ENCODE measurements at regions of chr10 and their contacts with region 1.

Region 1: GRCh38 chr10:22988581-22989360 is 60.9 kb downstream of the ARMC3 start:
- DNase-seq: peak; percentile 17 to 91 (median 72)

Region 2: GRCh38 chr10:22003079-22003913 is 985.5 kb before region 1 on chr10 and contains the start of gene DNAJC1:
- intact Hi-C with region 1: loop called (anchors 5 kb)
- DNase-seq: peak; percentile 97 to 99 (median 99)

Region 3: DNA sequence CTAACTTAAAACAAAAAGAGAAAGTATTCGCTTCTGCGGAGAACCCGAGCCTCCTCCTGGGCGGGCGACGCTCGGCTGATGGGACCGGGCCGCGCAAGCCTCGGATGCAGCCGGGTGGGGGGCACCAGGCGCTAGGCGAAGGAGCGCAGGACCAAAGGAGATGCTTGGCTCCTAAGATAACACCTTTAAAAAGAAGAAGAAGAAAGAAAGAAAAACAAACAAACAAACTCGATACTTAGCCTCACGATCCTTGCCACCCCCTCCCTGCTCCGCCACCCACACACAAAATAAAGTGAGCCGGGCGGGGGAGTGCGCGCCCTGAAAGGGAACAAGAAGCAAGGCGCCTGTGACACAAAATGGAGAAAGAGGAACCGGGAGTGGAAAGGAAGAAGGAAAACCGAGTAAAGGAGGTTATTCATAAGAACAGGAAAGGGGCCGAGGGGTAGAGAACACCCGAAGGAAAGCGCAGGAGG is 737.0 kb before region 1 on chr10:
- intact Hi-C with region 1: loop called (anchors 10 kb)
- DNase-seq: peak; percentile 55 to 91 (median 79)

Region 4: DNA sequence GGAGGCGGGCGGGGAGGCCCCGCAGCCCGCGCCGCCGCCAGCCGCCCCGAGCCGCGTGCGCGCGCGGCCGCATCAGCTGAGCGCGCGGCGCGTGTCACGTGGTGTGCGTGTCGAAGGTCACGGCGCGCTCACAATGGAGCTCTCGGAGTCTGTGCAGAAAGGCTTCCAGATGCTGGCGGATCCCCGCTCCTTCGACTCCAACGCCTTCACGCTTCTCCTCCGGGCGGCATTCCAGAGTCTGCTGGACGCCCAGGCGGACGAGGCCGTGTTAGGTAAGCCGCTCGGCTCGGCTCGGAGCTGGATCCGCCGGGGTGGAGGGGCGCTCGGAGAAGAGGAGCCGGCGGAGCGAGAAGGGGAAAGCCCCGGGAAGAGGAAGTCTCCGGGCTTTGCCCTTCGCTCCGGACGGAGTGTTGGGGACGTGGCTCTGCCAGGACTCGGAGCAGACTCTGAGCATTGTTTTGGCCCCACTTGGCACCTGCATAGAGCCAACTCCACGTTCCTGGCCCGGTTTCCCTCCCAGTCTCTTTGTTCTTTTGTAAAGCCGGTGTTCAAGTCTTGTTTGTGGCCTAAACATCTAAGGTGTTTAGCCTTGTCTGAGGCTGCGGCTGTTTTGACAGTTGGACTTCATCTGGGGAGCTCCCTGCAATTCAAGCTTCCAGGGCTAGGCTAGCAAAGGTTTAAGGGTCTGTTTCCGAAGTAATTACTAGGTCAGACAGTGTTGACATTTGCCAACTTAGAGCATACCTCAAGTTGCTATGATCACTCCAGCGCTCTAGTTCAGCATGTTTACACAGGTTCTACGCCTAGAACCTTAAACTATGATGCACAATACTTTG is 672.3 kb before region 1 on chr10 and contains the start of gene COMMD3:
- intact Hi-C with region 1: loop called (anchors 5 kb)
- DNase-seq: peak; percentile 77 to 95 (median 90)

Region 5: DNA sequence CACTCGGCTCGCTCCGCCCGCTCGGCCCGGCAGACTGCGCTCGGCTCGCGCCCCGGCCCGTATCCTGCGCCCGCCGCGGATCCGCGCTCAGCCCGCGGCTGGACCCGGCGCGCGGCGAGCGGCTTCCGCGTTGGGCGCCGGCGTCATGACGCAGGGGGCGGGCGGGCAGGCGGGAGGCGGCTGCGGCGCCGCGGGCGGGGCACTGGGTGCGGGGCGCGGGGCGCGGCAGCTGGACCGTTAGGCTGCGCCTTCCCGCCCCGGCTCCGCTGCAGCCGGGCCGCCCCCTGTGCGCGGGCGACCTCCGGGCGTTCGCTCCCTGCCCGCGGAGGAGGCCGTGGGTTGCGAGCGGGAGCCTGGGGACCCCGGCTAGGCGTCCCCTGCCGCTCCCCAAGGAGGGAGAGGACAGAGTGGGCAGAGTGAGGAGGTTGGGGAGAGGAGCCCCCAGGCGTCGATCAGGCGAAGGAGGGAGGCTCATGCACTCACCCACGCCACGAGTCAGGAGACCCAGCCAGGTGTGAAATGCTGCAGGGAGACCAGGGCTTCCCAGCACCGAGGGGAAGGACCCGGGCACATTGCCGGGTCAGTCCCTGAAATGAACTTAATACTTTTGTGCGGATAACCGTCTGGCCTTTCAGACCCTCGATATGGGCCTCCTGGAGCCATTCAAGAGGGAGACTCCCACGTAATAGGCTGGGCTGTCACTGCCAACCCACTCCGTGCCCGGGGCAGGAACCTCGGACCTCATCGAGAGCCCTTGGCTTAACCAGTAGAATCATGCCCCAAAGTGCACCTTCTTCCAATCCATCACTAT is 274.1 kb before region 1 on chr10 and contains the start of gene PIP4K2A:
- intact Hi-C with region 1: loop called (anchors 5 kb)
- DNase-seq: peak in 40 of 42 donors; percentile 56 to 91 (median 82)

Region 6: GRCh38 chr10:22742678-22743077 is 246.1 kb before region 1 on chr10:
- intact Hi-C with region 1: no loop called
- DNase-seq: no peak

Region 7: GRCh38 chr10:22894714-22895113 is 94.1 kb before region 1 on chr10:
- intact Hi-C with region 1: no loop called
- DNase-seq: peak in 29 of 42 donors; percentile 13 to 80 (median 42)

Region 8: GRCh38 chr10:23019633-23020032 is 30.9 kb after region 1 on chr10:
- intact Hi-C with region 1: no loop called
- DNase-seq: no peak

Region 9: GRCh38 chr10:23037561-23037960 is 48.8 kb after region 1 on chr10:
- intact Hi-C with region 1: loop called (anchors 2 kb)
- DNase-seq: peak; percentile 14 to 91 (median 70)